T-cell (primary cell): ENCODE measurements at regions of chr7 and their contacts with region 1.

Region 1: GRCh38 chr7:130853503-130854279 is 119.7 kb upstream of the KLF14 start:
- DNase-seq: no peak
- ATAC-seq: no peak
- H3K4me3 ChIP-seq: no peak overlapping the region
- H3K4me3 Mint-ChIP-seq: no peak overlapping the region
- H3K27ac ChIP-seq: no peak overlapping the region
- H3K27ac Mint-ChIP-seq: no peak overlapping the region
- H3K4me1 ChIP-seq: no peaks in the 10 kb centered on the region
- H3K4me1 Mint-ChIP-seq: no peaks in the 10 kb centered on the region
- H3K27me3 ChIP-seq: no peaks in the 10 kb centered on the region
- H3K27me3 Mint-ChIP-seq: no peaks in the 10 kb centered on the region

Region 2: GRCh38 chr7:130822642-130823041 is 31.0 kb before region 1 on chr7:
- CTCF ChIA-PET with region 1: no interaction called
- POLR2A ChIA-PET with region 1: interaction called in 1 of 2 experiments, 16 read pairs
- DNase-seq: no peak
- ATAC-seq: no peak
- H3K4me3 ChIP-seq: no peak overlapping the region
- H3K4me3 Mint-ChIP-seq: no peak overlapping the region
- H3K27ac ChIP-seq: no peak overlapping the region
- H3K27ac Mint-ChIP-seq: no peak overlapping the region
- H3K4me1 ChIP-seq: no peaks in the 10 kb centered on the region
- H3K4me1 Mint-ChIP-seq: peaks cover 0 to 6% (median 3%) of the 10 kb centered on the region in 3 donors
- H3K27me3 ChIP-seq: peaks cover 0 to 3% of the 10 kb centered on the region in 2 experiments
- H3K27me3 Mint-ChIP-seq: peaks cover 0 to 5% of the 10 kb centered on the region in 2 donors

Region 3: GRCh38 chr7:130838738-130839137 is 15.0 kb before region 1 on chr7:
- CTCF ChIA-PET with region 1: no interaction called
- POLR2A ChIA-PET with region 1: no interaction called
- DNase-seq: no peak
- ATAC-seq: no peak
- H3K4me3 ChIP-seq: no peak overlapping the region
- H3K4me3 Mint-ChIP-seq: no peak overlapping the region
- H3K27ac ChIP-seq: no peak overlapping the region
- H3K27ac Mint-ChIP-seq: no peak overlapping the region
- H3K4me1 ChIP-seq: peaks cover 2 to 10% of the 10 kb centered on the region in 2 experiments
- H3K4me1 Mint-ChIP-seq: peaks cover 7 to 19% (median 11%) of the 10 kb centered on the region in 3 donors
- H3K27me3 ChIP-seq: peaks cover 0 to 24% of the 10 kb centered on the region in 2 experiments
- H3K27me3 Mint-ChIP-seq: peaks cover 0 to 26% of the 10 kb centered on the region in 2 donors